Ascending aorta (tissue), 2 donors: ENCODE measurements at regions of chr14 and their contacts with region 1.

Region 1: DNA sequence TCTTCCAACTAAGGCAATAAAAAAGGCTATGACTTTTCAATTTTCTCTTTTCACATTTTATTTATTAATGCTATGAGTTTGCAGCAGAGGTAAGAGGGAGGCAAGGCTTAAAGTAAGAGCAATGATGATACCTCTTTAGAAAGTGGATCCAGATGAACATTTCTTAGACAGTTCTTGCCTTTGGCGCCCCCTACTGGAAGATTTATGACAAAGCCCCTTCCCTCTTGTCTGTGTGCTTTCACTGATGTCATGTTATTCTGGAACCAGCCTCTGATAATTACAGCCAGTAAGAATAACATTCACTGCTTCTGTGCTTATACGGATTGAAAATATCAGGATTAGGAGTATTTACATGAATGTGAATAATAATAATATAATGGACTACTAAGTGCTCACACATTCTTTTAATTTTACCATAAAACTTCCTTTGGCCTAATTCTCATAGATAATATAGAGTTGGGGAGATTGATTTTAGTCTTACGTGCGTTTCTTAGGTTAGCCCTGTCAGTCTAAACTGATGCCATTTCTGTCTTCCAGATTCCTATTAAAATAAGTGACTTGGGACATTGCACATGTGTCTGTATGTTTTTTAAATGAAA is 1929.9 kb upstream of the SEL1L start:
- DNase-seq: no peak
- H3K4me3 ChIP-seq: no peak overlapping the region
- H3K27ac ChIP-seq: no peak overlapping the region
- H3K4me1 ChIP-seq: no peaks in the 10 kb centered on the region
- H3K27me3 ChIP-seq: no peaks in the 10 kb centered on the region
- CTCF ChIP-seq: peak; percentile 8 to 64 (median 55)

Region 2: GRCh38 chr14:81710234-81710845 is 1753.3 kb before region 1 on chr14:
- intact Hi-C with region 1: loop called (anchors 10 kb)
- DNase-seq: no peak
- H3K4me3 ChIP-seq: no peak overlapping the region
- H3K27ac ChIP-seq: no peak overlapping the region
- H3K4me1 ChIP-seq: no peaks in the 10 kb centered on the region
- H3K27me3 ChIP-seq: no peaks in the 10 kb centered on the region
- CTCF ChIP-seq: peak in 2 of 3 experiments; percentile 66

Region 3: GRCh38 chr14:81990312-81990761 is 1473.3 kb before region 1 on chr14:
- intact Hi-C with region 1: loop called (anchors 10 kb)
- DNase-seq: peak in 1 of 2 donors; percentile 67
- H3K4me3 ChIP-seq: no peak overlapping the region
- H3K27ac ChIP-seq: no peak overlapping the region
- H3K4me1 ChIP-seq: no peaks in the 10 kb centered on the region
- H3K27me3 ChIP-seq: no peaks in the 10 kb centered on the region
- CTCF ChIP-seq: peak; percentile 47 to 93 (median 92)

Region 4: DNA sequence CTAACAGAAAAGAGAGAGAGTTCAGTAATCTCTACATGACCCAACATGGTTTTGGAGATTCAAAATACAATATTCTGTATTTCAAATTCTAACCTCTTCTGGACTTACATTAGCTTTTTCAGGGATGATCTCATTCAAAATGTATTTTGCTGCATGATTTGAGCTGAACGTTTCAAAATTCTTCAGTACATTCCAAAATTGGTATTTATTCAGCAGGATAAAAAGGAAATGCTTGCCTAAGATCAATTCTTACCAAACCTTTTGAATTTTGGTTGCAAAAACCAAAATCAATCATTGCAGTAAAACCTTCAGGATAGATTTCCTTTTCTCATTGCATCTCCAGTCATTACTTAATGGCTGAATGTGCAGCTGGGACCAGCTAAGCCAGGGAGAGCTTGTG is 168.7 kb before region 1 on chr14:
- intact Hi-C with region 1: loop called (anchors 10 kb)
- DNase-seq: no peak
- H3K4me3 ChIP-seq: no peak overlapping the region
- H3K27ac ChIP-seq: no peak overlapping the region
- H3K4me1 ChIP-seq: no peaks in the 10 kb centered on the region
- H3K27me3 ChIP-seq: no peaks in the 10 kb centered on the region
- CTCF ChIP-seq: no peak